Activated T-helper 2 cell treated with anti-CD3 and anti-CD28 coated beads, Interferon-gamma antibody, Interleukin-2, Interleukin-4, amounts not matched to agents 10 μg/mL and 5 μg/mL and 100 μg/mL, durations not matched to agents 14 hours and 24 hours and 36 hours (primary cell): ENCODE measurements at regions of chr15 and their contacts with region 1.

Region 1: DNA sequence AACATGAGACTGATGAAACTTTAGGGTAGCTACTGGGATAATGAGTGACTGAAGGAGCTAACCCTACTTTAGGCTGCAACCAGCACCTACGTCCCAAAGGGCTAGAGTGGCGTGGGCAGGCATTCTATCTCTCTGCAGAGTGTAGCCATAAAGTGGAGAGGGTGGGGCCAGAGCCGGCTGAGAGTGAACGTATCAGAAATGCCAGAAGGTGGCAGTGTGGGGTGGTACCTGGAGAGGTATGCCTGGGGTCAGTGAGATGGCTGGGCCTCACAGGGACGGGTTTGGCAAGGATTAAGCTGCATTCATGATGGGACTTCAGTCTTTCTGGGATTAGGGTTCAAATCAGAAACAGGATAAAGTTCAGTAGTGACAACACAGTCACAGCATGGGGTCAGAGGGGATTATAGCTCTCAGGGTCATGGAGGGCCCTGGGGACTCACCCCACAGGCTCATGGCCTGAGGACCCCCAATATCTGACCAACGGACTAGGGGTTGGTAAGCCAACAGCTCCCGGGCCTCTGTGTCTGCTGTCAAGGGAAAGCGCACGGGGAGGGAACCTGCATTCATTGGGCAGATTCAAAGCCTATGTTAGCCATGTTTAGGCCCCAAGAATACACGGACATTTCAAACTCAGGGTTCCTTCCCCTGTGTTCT is 86.5 kb upstream of the FOXB1 start:
- DNase-seq: peak; percentile 67
- H3K4me3 Mint-ChIP-seq: no peak overlapping the region
- H3K27ac Mint-ChIP-seq: peak overlapping the region; percentile 46
- H3K4me1 Mint-ChIP-seq: peaks cover 27% of the 10 kb centered on the region
- H3K27me3 Mint-ChIP-seq: peaks cover 23% of the 10 kb centered on the region

Region 2: DNA sequence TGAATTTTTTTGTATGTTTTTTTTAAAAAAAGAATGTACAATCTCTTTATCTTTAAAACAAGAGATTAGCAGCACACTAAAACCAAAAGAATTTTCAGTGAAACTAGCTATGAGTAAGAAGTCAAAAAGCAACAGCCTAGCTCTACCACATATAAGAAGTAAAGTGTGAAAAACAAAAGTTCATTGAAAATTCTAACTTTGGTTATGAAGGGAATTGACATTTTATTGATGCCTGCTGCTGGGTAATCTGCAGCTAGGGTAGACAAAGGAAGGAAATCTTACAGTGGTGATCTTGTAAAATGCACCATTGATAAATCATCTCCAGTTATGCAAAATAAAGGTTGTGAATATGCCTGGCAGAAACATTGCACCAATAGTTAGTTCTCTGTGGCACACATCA is 48.6 kb after region 1 on chr15:
- intact Hi-C with region 1: loop called (anchors 1 kb)
- DNase-seq: no peak
- H3K4me3 Mint-ChIP-seq: no peak overlapping the region
- H3K27ac Mint-ChIP-seq: peak overlapping the region; percentile 15
- H3K4me1 Mint-ChIP-seq: peaks cover 23% of the 10 kb centered on the region
- H3K27me3 Mint-ChIP-seq: peaks cover 6% of the 10 kb centered on the region

Region 3: GRCh38 chr15:59976480-59977271 is 59.0 kb after region 1 on chr15:
- intact Hi-C with region 1: no loop called
- DNase-seq: peak; percentile 75
- H3K4me3 Mint-ChIP-seq: peak overlapping the region; percentile 55
- H3K27ac Mint-ChIP-seq: peak overlapping the region; percentile 81
- H3K4me1 Mint-ChIP-seq: peaks cover 42% of the 10 kb centered on the region
- H3K27me3 Mint-ChIP-seq: peaks cover 8% of the 10 kb centered on the region

Region 4: GRCh38 chr15:60006203-60006862 is 88.7 kb after region 1 on chr15:
- intact Hi-C with region 1: loop called (anchors 1 kb)
- DNase-seq: peak; percentile 84
- H3K4me3 Mint-ChIP-seq: peak overlapping the region; percentile 95
- H3K27ac Mint-ChIP-seq: peak overlapping the region; percentile 94
- H3K4me1 Mint-ChIP-seq: peaks cover 47% of the 10 kb centered on the region
- H3K27me3 Mint-ChIP-seq: peaks cover 65% of the 10 kb centered on the region

Region 5: DNA sequence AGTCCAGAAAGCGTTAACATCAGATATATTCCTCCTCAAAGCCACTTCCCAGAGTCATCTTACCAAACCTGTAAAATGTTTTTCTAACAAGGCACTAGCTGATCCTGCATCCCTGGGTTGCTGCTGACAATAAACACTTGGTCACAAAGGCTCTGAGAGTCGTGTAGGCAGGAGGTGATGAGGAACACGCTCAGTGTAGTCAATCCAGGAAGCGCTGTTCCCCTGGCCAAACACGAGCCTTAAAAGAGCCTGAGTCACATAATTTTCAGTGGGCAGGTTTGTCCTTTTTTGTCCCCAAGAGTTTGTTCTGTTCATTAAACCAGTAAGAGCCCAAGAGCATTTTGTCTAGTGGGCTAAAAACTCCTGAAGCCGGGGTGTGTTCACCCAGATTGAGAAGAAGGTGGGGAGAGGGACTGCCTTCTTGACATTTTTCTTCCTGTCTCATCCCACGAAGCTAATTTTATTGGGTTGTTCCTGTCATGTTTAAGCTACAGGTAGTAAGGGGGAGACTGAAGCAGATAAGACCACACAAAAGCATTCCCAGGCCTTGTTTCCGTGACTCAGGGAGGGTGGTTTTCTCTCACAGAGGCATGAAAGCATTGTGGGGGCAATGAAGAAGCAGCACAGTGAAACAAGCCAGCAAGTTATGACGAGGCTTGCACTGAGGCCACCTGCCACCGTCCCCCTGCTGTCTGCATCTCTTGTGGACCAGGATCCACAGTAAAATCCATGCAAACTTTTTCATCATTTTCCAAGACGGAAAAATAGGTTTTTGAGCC is 160.1 kb after region 1 on chr15:
- intact Hi-C with region 1: loop called (anchors 2 kb)
- DNase-seq: no peak
- H3K4me3 Mint-ChIP-seq: peak overlapping the region; percentile 6
- H3K27ac Mint-ChIP-seq: peak overlapping the region; percentile 93
- H3K4me1 Mint-ChIP-seq: peaks cover 53% of the 10 kb centered on the region
- H3K27me3 Mint-ChIP-seq: no peaks in the 10 kb centered on the region

Region 6: GRCh38 chr15:60128000-60128376 is 210.4 kb after region 1 on chr15:
- intact Hi-C with region 1: loop called (anchors 5 kb)
- DNase-seq: no peak
- H3K4me3 Mint-ChIP-seq: peak overlapping the region; percentile 71
- H3K27ac Mint-ChIP-seq: peak overlapping the region; percentile 86
- H3K4me1 Mint-ChIP-seq: peaks cover 53% of the 10 kb centered on the region
- H3K27me3 Mint-ChIP-seq: peaks cover 9% of the 10 kb centered on the region

Region 7: DNA sequence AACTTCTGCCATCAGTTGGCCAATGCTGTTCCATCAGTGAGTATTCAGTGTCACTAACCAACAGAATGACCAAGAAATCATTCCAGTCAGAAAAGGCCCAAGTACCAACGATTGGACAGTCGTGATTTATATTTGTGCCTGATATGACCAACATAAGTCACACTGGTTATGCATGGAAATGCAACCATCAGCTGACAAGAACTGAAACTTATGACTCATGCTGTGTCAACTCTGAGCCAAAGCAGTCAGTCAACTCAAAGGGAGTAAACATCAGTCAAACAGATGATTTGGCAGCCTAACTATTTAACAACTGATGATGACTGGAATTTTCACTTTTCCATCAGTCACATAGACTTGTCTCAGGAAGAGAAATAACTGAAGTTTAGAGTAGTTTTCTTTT is 337.8 kb after region 1 on chr15:
- intact Hi-C with region 1: loop called (anchors 2 kb)
- DNase-seq: no peak
- H3K4me3 Mint-ChIP-seq: no peak overlapping the region
- H3K27ac Mint-ChIP-seq: no peak overlapping the region
- H3K4me1 Mint-ChIP-seq: peaks cover 10% of the 10 kb centered on the region
- H3K27me3 Mint-ChIP-seq: peaks cover 59% of the 10 kb centered on the region